MCF 10A (cell line): ENCODE measurements at regions of chr16 and their contacts with region 1.

Region 1: GRCh38 chr16:68237243-68238028 is 1.5 kb upstream of the ESRP2 start:
- DNase-seq: peak; percentile 98
- H3K4me3 Mint-ChIP-seq: peak overlapping the region; percentile 81
- H3K27ac Mint-ChIP-seq: peak overlapping the region; percentile 94
- H3K4me1 Mint-ChIP-seq: peaks cover 16% of the 10 kb centered on the region
- H3K27me3 Mint-ChIP-seq: no peaks in the 10 kb centered on the region
- CTCF ChIP-seq: no peak

Region 2: GRCh38 chr16:68074850-68075555 is 162.4 kb before region 1 on chr16:
- CTCF ChIA-PET with region 1: interaction called, 4 read pairs
- POLR2A ChIA-PET with region 1: interaction called, 25 read pairs
- intact Hi-C with region 1: no loop called
- DNase-seq: no peak
- H3K4me3 Mint-ChIP-seq: no peak overlapping the region
- H3K27ac Mint-ChIP-seq: no peak overlapping the region
- H3K4me1 Mint-ChIP-seq: peaks cover 5% of the 10 kb centered on the region
- H3K27me3 Mint-ChIP-seq: no peaks in the 10 kb centered on the region
- CTCF ChIP-seq: no peak

Region 3: GRCh38 chr16:68093816-68094613 is 143.4 kb before region 1 on chr16:
- CTCF ChIA-PET with region 1: interaction called, 3 read pairs
- POLR2A ChIA-PET with region 1: interaction called, 99 read pairs
- intact Hi-C with region 1: no loop called
- DNase-seq: peak; percentile 35
- H3K4me3 Mint-ChIP-seq: no peak overlapping the region
- H3K27ac Mint-ChIP-seq: peak overlapping the region; percentile 18
- H3K4me1 Mint-ChIP-seq: peaks cover 56% of the 10 kb centered on the region
- H3K27me3 Mint-ChIP-seq: no peaks in the 10 kb centered on the region
- CTCF ChIP-seq: peak; percentile 43

Region 4: DNA sequence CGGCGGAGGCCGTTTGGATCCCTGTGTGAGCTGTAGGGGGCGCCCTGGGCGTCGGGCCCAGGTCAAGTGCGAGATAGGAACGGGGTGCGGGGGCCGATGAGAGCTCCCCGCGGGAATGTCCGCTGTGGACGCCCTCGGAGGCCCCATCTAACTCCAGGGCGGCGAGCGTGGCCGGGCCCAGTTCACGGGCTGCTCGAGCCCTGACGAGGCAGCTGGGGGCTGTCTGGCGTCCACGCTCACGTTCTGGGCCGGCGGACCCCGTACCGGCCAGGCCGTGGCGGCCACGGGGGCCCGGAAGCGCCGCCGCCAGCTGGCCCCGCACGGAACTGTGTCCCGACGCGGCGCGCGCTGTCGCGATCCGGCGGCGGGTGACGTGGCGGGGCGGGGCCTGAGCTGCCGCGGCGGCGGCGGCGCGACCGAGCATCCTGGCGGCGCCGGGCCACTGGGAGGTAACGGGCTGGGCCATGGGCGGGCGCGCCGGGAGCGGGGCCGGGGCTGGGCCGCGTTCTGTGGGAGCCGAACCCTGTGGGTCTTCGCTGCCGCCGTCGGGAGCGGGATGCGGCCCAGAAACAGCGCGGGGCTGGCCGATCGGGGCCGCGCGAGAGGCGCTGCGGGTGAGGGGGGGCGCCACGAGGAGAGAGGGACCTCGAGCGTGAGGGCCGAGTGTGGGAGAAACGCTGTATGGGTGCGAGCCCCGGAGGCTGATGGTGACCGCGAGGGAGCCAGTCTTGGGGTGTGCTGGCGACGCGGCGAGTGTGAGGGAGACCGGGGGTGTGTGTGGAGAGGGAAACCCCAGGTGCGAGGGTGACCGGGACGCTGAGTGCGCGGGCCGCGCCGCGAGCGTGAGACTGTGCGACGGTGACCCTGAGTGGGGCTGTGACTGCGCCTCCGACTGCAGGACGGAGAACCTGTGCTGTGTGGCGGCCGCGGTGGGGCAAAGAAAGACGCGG is 27.0 kb after region 1 on chr16 and contains the start of gene SLC7A6:
- CTCF ChIA-PET with region 1: interaction called, 13 read pairs
- POLR2A ChIA-PET with region 1: interaction called, 36 read pairs
- intact Hi-C with region 1: no loop called
- DNase-seq: peak; percentile 60
- H3K4me3 Mint-ChIP-seq: peak within 1 kb of the TSS; percentile 97
- H3K27ac Mint-ChIP-seq: peak within 1 kb of the TSS; percentile 92
- H3K4me1 Mint-ChIP-seq: peaks cover 22% of the 10 kb centered on the region
- H3K27me3 Mint-ChIP-seq: no peaks in the 10 kb centered on the region
- CTCF ChIP-seq: peak; percentile 81
- total RNA-seq, gene SLC7A6: 45.3 and 61.0 TPM in 2 replicates

Region 5: GRCh38 chr16:68298907-68299561 is 61.6 kb after region 1 on chr16:
- CTCF ChIA-PET with region 1: no interaction called
- POLR2A ChIA-PET with region 1: interaction called, 18 read pairs
- intact Hi-C with region 1: no loop called
- DNase-seq: peak; percentile 50
- H3K4me3 Mint-ChIP-seq: no peak overlapping the region
- H3K27ac Mint-ChIP-seq: peak overlapping the region; percentile 39
- H3K4me1 Mint-ChIP-seq: no peaks in the 10 kb centered on the region
- H3K27me3 Mint-ChIP-seq: no peaks in the 10 kb centered on the region
- CTCF ChIP-seq: no peak

Region 6: GRCh38 chr16:68328151-68328859 is 90.9 kb after region 1 on chr16:
- CTCF ChIA-PET with region 1: interaction called, 36 read pairs
- POLR2A ChIA-PET with region 1: interaction called, 12 read pairs
- intact Hi-C with region 1: loop called (anchors 1 kb)
- DNase-seq: peak; percentile 88
- H3K4me3 Mint-ChIP-seq: no peak overlapping the region
- H3K27ac Mint-ChIP-seq: no peak overlapping the region
- H3K4me1 Mint-ChIP-seq: peaks cover 10% of the 10 kb centered on the region
- H3K27me3 Mint-ChIP-seq: no peaks in the 10 kb centered on the region
- CTCF ChIP-seq: peak; percentile 91